ENCODE measurements at regions of chr2 and their contacts with region 1.

Region 1: DNA sequence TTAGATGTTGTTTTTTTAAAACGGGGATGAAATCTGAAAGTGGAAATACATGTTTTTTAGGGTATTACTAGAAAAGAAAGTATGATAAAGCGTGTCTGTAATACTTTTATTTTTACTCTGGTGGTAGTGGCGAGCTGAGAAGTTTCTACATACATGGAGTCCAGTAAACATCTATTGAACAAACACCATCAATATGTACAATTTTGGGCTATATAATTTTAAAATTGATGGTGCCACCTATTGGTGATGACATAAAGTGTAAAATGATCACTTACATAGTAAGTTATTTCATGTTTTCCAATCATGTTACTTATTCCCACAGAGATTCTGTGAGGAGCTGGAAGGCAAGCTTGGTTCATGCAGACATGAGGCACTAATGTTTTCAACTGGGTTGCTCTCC is 31.5 kb upstream of the NFE2L2 start:
- DNase-seq: no peak
- ATAC-seq: peak; percentile 60
- H3K4me3 Mint-ChIP-seq: no peak overlapping the region
- H3K27ac Mint-ChIP-seq: no peak overlapping the region
- H3K4me1 Mint-ChIP-seq: peaks cover 50% of the 10 kb centered on the region
- H3K27me3 Mint-ChIP-seq: no peaks in the 10 kb centered on the region

Region 2: DNA sequence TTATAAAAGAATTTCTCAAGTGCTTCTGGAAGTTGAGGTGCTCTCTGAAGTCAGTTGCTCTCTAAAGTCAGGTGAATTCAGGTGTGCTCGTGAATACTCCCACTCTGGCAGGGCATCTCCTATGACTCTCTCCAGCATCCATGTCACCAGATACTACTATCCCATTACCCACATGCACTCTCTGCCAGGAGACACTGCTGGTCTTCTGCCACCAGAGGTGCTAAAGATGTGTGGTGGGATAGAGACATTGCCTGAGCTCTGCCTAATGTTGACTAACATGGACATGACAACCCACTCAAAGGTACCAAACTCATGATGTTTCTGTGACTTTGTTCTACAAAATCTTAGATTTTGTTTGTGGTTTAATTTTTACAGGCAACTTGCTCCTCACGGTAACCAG is 189.8 kb before region 1 on chr2:
- CTCF ChIA-PET with region 1: no interaction called
- POLR2A ChIA-PET with region 1: no interaction called
- DNase-seq: no peak
- ATAC-seq: no peak
- H3K4me3 Mint-ChIP-seq: no peak overlapping the region
- H3K27ac Mint-ChIP-seq: no peak overlapping the region
- H3K4me1 Mint-ChIP-seq: no peaks in the 10 kb centered on the region
- H3K27me3 Mint-ChIP-seq: peaks cover 7% of the 10 kb centered on the region

Region 3: DNA sequence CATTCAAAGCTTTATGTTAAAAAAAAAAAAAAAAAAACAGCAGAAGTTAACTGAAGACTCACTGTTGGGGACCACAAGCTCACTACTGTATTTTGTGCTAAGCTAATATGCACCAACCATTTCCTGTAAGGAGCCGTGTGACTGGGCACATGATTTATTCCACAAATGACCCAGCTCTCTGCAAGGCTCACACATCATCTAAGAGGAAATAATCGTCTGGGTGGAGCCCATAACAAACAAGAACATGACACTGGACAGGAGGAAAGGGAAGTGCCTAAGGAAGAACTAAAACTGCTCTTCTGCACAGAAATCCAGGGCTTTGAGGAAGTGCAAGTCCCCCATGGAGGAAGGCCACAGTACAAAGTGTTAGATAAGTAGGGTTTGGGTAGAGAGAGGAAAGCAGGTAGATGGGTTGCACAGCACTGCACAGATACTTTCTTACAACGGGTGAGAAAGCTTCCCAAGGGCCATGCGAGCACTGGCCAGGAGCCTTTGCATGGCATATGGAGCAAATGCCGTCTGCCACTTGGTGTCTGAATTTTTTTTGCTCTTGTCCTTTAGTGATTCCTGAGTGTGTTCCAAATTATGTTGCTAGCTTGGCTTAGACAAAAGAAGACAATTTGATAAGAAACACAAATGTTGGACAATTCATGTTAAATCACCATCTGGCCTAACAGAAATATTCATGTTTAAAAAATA is 56.0 kb before region 1 on chr2:
- CTCF ChIA-PET with region 1: interaction called, 12 read pairs
- POLR2A ChIA-PET with region 1: no interaction called
- DNase-seq: peak; percentile 64
- ATAC-seq: peak; percentile 86
- H3K4me3 Mint-ChIP-seq: peak overlapping the region; percentile 25
- H3K27ac Mint-ChIP-seq: peak overlapping the region; percentile 88
- H3K4me1 Mint-ChIP-seq: peaks cover 68% of the 10 kb centered on the region
- H3K27me3 Mint-ChIP-seq: no peaks in the 10 kb centered on the region

Region 4: DNA sequence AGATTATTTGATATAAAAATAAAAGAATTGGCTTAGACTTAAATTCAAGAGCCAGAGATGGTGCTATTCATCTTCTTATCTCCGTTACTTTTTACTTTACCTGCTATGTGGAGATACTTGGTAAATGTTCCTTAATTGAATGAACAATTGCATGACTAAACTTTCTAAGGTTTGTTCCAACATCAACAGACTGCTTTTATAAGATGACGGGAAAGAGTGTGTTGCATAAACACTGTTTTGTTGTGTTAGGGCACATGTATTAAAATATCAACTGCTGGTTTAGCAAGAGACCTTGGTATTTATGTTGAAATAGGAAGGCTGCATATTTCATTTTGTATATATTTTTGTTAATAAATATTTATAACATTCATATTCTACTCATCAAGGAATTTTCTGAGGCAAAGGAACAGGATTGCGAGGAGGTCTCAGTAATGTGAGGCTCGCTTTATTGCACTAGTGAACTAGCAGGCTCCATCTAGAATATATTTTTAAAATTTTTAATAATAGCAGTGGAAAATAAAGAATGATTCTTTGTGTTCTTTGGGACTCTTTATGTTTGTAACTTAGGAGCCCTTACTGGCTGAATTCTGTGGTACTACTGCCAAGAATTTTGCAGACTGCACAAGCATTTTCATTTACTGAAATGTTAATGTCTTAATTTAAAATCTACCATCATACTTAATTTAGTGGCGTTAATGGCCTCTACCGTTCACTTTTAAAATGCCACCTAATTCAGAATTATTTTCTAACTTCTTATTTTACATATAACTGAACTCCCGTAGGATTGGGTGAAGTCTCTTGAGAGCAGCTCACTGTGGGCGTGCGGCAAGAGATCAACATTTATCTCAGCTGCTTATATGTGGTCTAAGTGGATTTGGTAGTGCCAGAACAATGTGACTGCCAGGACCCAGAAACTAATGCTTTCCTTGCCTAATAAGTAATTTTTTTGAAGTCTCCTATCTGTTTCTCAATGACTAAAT is 20.7 kb before region 1 on chr2:
- CTCF ChIA-PET with region 1: interaction called, 11 read pairs
- POLR2A ChIA-PET with region 1: no interaction called
- DNase-seq: no peak
- ATAC-seq: no peak
- H3K4me3 Mint-ChIP-seq: no peak overlapping the region
- H3K27ac Mint-ChIP-seq: no peak overlapping the region
- H3K4me1 Mint-ChIP-seq: peaks cover 29% of the 10 kb centered on the region
- H3K27me3 Mint-ChIP-seq: no peaks in the 10 kb centered on the region

Region 5: DNA sequence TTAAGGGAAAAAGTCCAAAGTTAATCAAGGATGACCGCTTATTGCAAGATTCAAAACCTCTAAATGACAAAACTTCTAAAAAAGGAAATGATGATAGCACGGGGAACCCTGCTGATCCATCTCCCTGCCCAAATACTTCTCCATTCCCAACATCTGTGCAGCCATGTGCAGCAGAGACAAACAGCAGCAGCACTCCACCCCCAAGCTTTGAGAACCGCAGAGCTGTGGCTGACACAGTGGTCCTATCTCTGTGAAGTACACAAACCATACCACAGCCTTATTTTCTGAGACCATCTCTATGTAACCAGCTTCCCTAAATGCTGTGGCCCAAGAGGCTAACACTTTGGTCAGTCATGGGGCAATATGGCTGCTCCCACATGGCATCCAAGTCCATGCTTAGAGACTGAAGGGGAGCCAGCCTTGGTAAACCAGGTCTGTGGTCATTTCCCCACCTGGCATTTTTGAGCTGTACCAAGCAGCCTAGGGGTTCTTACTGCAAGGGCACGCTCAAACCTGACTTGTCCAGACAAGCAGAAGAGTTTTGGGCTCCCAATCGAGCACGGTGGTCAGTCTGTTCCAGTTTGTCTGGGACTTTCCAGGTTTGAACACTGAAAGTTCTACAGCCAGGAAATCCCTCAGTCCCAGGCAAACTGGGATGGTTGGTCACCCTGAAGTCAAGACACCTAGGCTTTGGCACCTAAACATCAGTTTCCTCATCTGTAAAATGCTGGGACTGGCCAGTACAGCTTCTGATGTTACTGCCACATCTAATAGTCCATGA is 14.4 kb before region 1 on chr2:
- CTCF ChIA-PET with region 1: interaction called, 33 read pairs
- POLR2A ChIA-PET with region 1: interaction called, 3 read pairs
- DNase-seq: peak; percentile 43
- ATAC-seq: peak; percentile 55
- H3K4me3 Mint-ChIP-seq: no peak overlapping the region
- H3K27ac Mint-ChIP-seq: peak overlapping the region; percentile 19
- H3K4me1 Mint-ChIP-seq: peaks cover 50% of the 10 kb centered on the region
- H3K27me3 Mint-ChIP-seq: no peaks in the 10 kb centered on the region

Region 6: DNA sequence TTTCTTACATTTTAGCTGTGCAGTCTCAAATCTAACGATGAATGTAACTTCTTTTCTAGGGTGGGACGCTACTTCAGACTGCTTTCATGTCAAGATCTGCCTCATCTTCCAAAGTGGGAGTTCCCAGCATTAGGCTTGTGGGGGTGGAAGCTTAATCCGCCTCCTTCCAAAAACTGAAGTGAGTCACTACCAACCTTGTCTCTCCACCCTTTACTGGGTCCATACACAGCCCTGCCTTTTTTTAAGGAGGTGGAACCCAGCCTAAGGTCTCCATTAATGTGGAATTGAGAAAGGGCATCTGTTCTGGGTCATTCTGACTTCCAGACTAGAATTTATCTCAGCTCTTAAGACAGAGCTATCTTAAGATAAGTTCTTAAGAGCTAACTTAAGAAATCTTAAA is 10.5 kb after region 1 on chr2:
- CTCF ChIA-PET with region 1: interaction called, 30 read pairs
- POLR2A ChIA-PET with region 1: interaction called, 3 read pairs
- DNase-seq: no peak
- ATAC-seq: no peak
- H3K4me3 Mint-ChIP-seq: no peak overlapping the region
- H3K27ac Mint-ChIP-seq: no peak overlapping the region
- H3K4me1 Mint-ChIP-seq: peaks cover 33% of the 10 kb centered on the region
- H3K27me3 Mint-ChIP-seq: no peaks in the 10 kb centered on the region

Measured in activated CD8-positive, alpha-beta T cell treated with anti-CD3 and anti-CD28 coated beads, Interleukin-2, amount 10 ng/mL, durations not matched to agents 7 days and 5 days (primary cell).